ENCODE measurements at regions of chr10 and their contacts with region 1.

Region 1: DNA sequence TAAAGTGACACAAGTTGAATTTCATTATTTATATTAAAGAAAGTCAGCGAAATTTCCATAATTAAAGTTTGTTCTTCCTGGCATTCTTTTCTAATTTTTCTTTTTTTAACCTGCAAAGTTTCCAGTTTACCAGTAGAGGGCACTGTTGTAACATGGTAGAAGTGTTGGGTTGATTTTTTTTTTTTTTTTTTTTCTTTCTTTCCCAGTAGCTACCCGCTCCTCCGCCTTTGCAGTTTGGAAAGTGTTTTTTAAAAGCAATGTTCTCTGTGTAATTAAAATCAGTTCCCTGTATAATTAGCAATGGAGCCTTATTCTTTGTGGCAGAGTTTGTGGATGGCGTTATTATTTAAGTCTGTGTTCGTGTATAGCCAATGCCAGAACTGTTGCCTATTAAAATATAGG is 53.7 kb downstream of the TAF3 start:
- DNase-seq: no peak
- ATAC-seq: no peak
- H3K4me3 Mint-ChIP-seq: peak overlapping the region; percentile 56
- H3K27ac Mint-ChIP-seq: no peak overlapping the region
- H3K4me1 Mint-ChIP-seq: peaks cover 9% of the 10 kb centered on the region
- H3K27me3 Mint-ChIP-seq: no peaks in the 10 kb centered on the region

Region 2: DNA sequence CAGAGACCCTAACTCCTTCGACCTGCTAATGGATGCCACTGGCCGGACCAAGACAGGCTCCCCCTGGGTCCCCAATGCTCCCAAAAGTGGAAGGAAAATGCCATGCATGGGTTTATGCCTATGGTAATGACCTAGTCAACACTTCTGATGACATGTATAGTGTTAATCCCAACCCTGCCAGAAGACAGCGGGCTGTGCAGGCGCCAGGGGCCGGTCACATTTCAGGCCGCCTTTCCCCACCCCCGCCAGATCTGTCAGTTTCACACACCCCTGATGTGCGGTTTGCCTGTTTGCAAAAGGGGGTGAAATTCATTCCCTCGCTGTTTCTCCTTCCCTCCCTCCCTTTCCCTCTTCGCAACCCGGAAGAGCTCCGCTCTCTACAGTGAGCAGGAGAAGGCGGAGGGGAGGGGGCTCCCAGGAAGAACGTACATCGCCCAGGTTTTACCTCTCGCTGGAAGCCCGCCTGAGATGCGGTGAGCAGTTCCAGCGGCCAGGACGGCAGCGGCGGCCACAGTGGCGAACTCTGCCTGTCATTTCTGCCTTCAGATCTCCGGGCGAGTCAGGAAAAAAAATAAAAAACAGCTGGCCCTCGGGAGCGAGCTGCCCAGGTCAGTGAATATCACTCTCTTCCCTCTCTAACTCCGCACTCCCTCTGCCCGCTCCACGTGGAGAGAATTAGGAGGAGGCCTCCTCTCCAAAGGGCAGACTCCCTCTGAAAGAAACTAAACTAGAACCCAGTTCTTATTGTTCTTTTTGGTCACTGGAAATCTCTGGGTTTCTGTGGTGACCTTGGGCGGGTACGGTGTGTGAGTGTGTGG is 173.1 kb after region 1 on chr10:
- CTCF ChIA-PET with region 1: no interaction called
- POLR2A ChIA-PET with region 1: no interaction called
- intact Hi-C with region 1: loop called (anchors 2 to 5 kb)
- DNase-seq: peak; percentile 43
- ATAC-seq: no peak
- H3K4me3 Mint-ChIP-seq: peak overlapping the region; percentile 57
- H3K27ac Mint-ChIP-seq: no peak overlapping the region
- H3K4me1 Mint-ChIP-seq: peaks cover 72% of the 10 kb centered on the region
- H3K27me3 Mint-ChIP-seq: peaks cover 87% of the 10 kb centered on the region

Region 3: DNA sequence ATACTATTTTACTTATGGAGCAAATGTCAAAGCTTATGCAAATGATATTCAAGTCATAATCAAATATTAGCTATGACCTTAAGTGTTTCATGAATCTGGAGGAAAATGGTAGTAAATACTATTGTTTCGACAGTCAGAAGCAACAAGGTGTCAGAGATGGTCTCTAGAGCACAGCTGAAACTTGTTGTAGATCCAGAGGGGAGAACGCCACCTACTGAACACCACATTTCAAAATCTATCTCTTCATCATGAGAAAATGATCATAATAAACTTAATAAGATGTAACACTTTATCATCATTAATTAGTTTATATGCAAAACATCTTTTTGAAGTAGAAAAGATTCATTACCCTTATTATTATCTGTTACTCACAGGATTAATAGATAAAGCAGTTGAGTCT is 601.2 kb after region 1 on chr10:
- CTCF ChIA-PET with region 1: no interaction called
- POLR2A ChIA-PET with region 1: no interaction called
- intact Hi-C with region 1: loop called (anchors 5 kb)
- DNase-seq: peak; percentile 18
- ATAC-seq: peak; percentile 49
- H3K4me3 Mint-ChIP-seq: no peak overlapping the region
- H3K27ac Mint-ChIP-seq: no peak overlapping the region
- H3K4me1 Mint-ChIP-seq: peaks cover 5% of the 10 kb centered on the region
- H3K27me3 Mint-ChIP-seq: peaks cover 15% of the 10 kb centered on the region

Region 4: GRCh38 chr10:8873310-8873709 is 1001.3 kb after region 1 on chr10:
- CTCF ChIA-PET with region 1: no interaction called
- POLR2A ChIA-PET with region 1: no interaction called
- intact Hi-C with region 1: loop called in 1 of 2 experiments (anchors 5 kb)
- DNase-seq: no peak
- ATAC-seq: no peak
- H3K4me3 Mint-ChIP-seq: no peak overlapping the region
- H3K27ac Mint-ChIP-seq: no peak overlapping the region
- H3K4me1 Mint-ChIP-seq: no peaks in the 10 kb centered on the region
- H3K27me3 Mint-ChIP-seq: peaks cover 4% of the 10 kb centered on the region

Region 5: DNA sequence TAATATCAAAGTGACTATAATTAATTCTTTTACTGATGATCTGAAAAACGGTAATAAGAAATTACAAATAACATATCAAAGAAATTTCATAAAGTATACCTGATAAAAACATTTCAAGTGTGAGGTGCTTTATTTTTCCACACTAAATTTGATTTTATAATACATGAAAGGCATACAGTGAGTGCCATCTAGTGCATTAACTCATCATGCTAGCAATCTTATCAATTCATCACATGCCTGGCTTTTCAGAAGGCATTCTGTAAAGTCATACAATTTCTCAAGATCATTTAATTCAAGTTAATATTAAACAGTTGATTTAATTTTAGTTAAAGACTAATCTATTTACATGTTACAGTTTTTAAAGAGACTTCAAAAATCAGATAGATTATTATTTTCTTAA is 1203.4 kb after region 1 on chr10:
- CTCF ChIA-PET with region 1: no interaction called
- POLR2A ChIA-PET with region 1: no interaction called
- intact Hi-C with region 1: loop called in 1 of 2 experiments (anchors 10 kb)
- DNase-seq: no peak
- ATAC-seq: no peak
- H3K4me3 Mint-ChIP-seq: no peak overlapping the region
- H3K27ac Mint-ChIP-seq: no peak overlapping the region
- H3K4me1 Mint-ChIP-seq: peaks cover 18% of the 10 kb centered on the region
- H3K27me3 Mint-ChIP-seq: peaks cover 8% of the 10 kb centered on the region

Region 6: GRCh38 chr10:9097206-9097985 is 1225.4 kb after region 1 on chr10:
- CTCF ChIA-PET with region 1: no interaction called
- POLR2A ChIA-PET with region 1: no interaction called
- intact Hi-C with region 1: loop called in 1 of 2 experiments (anchors 10 kb)
- DNase-seq: no peak
- ATAC-seq: no peak
- H3K4me3 Mint-ChIP-seq: no peak overlapping the region
- H3K27ac Mint-ChIP-seq: no peak overlapping the region
- H3K4me1 Mint-ChIP-seq: peaks cover 46% of the 10 kb centered on the region
- H3K27me3 Mint-ChIP-seq: peaks cover 3% of the 10 kb centered on the region

Region 7: DNA sequence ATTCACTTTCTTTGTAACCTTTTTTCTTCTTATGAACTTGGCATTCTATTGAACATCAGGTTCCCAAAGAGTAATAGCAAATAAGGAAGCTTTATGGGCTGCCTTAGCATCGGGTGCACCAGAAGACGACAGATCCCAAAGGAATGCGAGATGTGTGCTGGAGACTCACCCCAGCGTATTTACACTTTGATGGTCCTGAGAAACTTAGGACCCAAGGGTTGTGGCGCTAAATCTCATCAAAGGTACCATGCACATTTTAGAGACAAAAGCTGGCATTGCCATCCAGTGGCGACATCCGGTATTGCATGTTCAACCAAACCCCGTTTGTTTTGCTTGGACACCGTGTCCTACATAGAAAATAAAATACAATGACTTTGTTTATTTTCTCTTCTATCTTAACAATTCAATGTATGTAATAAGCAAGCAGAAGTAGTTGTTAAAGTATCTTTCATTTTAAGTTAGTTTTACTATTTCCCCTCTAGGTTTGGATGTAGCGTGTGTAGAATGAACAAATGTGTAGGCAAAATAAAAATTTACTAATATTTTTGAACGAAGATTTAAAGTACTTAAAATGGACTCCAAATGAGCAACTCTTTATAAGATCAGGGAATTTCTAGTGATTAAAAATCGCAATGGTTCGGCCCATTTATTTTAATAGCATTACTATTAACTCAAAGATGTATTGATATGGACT is 1337.2 kb after region 1 on chr10:
- CTCF ChIA-PET with region 1: interaction called, 3 read pairs
- POLR2A ChIA-PET with region 1: no interaction called
- intact Hi-C with region 1: loop called (anchors 1 kb)
- DNase-seq: peak; percentile 85
- ATAC-seq: peak; percentile 53
- H3K4me3 Mint-ChIP-seq: no peak overlapping the region
- H3K27ac Mint-ChIP-seq: no peak overlapping the region
- H3K4me1 Mint-ChIP-seq: peaks cover 9% of the 10 kb centered on the region
- H3K27me3 Mint-ChIP-seq: peaks cover 5% of the 10 kb centered on the region